Activated T-helper 1 cell treated with anti-CD3 and anti-CD28 coated beads, Interleukin-12 subunit alpha, Interleukin-12 subunit beta, Interleukin-2, Interleukin-4 antibody, amounts not matched to agents 30 ng/mL and 10 ng/mL and 1 ng/mL, durations not matched to agents 14 hours and 24 hours and 36 hours (primary cell): ENCODE measurements at regions of chr4 and their contacts with region 1.

Region 1: DNA sequence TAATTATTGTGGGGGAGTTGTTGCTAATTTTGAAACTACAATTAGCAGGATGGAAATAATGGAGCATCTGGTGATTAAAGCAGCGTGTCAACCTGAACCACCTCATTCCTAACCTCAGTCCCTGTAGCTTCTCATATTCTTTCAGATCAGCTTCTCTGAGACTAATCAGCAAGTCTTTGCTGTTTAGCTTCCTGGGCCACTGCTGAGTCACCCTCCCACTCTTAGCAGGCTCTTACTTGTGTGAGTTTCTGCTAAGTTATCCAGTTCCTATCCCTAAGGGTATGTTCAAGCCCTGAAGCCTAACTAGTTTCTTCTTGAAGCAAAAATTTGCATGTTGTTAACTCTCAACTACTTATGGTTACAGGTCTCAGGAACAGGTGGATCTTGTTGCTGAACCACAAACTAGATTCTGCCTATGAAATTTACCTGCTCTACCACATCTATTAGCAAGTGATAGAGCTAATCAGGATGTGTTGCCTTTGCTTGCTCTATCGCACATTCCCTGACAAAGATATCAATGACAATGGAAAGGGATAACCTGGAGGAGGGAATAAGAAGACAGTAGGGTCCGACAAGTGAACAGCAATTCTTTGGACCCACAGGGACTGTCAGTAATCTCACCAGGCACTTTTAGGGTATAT is 134.2 kb downstream of the EIF4E start:
- DNase-seq: no peak
- H3K4me3 Mint-ChIP-seq: no peak overlapping the region
- H3K27ac Mint-ChIP-seq: no peak overlapping the region
- H3K4me1 Mint-ChIP-seq: peaks cover 23% of the 10 kb centered on the region
- H3K27me3 Mint-ChIP-seq: peaks cover 3% of the 10 kb centered on the region

Region 2: DNA sequence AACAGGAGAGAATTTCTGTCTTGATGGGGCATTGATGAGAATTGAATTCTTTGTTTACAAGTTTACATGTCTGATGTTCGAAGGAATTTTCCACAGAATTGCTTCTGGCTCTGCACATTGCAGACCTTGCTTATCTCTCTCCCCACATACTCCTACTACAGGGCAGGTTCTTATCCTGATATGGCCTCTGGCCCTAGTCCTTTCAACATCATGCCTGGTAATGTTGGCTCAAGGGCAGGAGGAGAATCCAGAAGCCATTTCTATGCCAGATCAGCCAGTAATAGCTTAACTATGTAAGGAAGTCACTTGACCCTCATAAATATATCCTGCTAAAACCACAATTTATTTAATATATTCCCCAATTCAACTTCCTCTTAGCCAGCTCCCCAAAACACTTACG is 112.0 kb before region 1 on chr4:
- intact Hi-C with region 1: no loop called
- DNase-seq: no peak
- H3K4me3 Mint-ChIP-seq: no peak overlapping the region
- H3K27ac Mint-ChIP-seq: no peak overlapping the region
- H3K4me1 Mint-ChIP-seq: no peaks in the 10 kb centered on the region
- H3K27me3 Mint-ChIP-seq: peaks cover 2% of the 10 kb centered on the region

Region 3: DNA sequence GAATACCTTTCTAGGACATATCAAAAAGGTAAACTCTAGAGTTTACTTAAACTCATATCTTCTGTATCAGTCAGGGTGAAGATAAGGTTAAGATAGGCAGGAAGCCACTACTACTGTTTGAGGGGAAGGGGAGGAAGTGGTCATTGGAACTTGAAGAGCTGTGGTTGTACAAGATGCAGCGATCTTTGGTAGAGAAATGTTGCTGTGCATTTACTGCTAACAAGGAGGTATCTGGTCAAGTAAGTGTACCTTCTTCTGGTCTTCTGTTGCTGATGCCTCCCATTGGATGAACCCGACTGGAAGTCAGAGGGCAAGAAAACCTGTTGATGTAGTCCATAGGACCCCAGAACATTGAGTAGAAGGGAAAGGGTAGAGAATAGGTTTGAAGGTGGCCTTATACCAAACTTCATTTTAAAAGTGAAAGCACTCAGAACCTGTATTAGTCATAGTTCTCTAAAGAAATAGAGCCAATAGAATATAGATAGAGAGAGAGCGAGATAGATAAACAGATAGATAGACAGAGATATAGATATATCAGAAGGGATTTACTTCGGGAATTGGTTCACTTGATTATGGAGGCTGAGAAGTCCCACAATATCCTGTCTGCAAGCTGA is 88.4 kb before region 1 on chr4:
- intact Hi-C with region 1: loop called (anchors 5 kb)
- DNase-seq: peak; percentile 42
- H3K4me3 Mint-ChIP-seq: peak overlapping the region; percentile 68
- H3K27ac Mint-ChIP-seq: peak overlapping the region; percentile 79
- H3K4me1 Mint-ChIP-seq: peaks cover 27% of the 10 kb centered on the region
- H3K27me3 Mint-ChIP-seq: peaks cover 1% of the 10 kb centered on the region